B cell (primary cell): ENCODE measurements at regions of chrX and their contacts with region 1.

Region 1: GRCh38 chrX:75156021-75156945 is at the start of gene ABCB7:
- DNase-seq: peak; percentile 81
- ATAC-seq: peak; percentile 89
- H3K4me3 ChIP-seq: peak within 1 kb of the TSS; percentile 45 to 75 (median 70)
- H3K4me3 Mint-ChIP-seq: peak within 1 kb of the TSS; percentile 86
- H3K27ac ChIP-seq: peak within 1 kb of the TSS; percentile 78 to 82
- H3K27ac Mint-ChIP-seq: peak within 1 kb of the TSS; percentile 94
- H3K4me1 ChIP-seq: peaks cover 6 to 9% of the 10 kb centered on the region in 2 donors
- H3K4me1 Mint-ChIP-seq: peaks cover 37% of the 10 kb centered on the region
- H3K27me3 ChIP-seq: no peaks in the 10 kb centered on the region
- H3K27me3 Mint-ChIP-seq: no peaks in the 10 kb centered on the region
- CTCF ChIP-seq: no peak
- total RNA-seq, gene ABCB7: 34.7 and 39.1 TPM in 2 replicates

Region 2: GRCh38 chrX:74924449-74925225 is 231.6 kb before region 1 on chrX:
- CTCF ChIA-PET with region 1: no interaction called
- POLR2A ChIA-PET with region 1: no interaction called
- intact Hi-C with region 1: loop called (anchors 5 kb)
- DNase-seq: peak; percentile 53
- ATAC-seq: peak; percentile 52
- H3K4me3 ChIP-seq: peak overlapping the region in 4 of 5 experiments; percentile 24 to 56 (median 43)
- H3K4me3 Mint-ChIP-seq: peak overlapping the region; percentile 95
- H3K27ac ChIP-seq: no peak overlapping the region
- H3K27ac Mint-ChIP-seq: peak overlapping the region; percentile 91
- H3K4me1 ChIP-seq: peaks cover 11% of the 10 kb centered on the region in 2 donors
- H3K4me1 Mint-ChIP-seq: peaks cover 18% of the 10 kb centered on the region
- H3K27me3 ChIP-seq: peaks cover 0 to 4% (median 1%) of the 10 kb centered on the region in 4 experiments
- H3K27me3 Mint-ChIP-seq: peaks cover 7% of the 10 kb centered on the region
- CTCF ChIP-seq: no peak

Region 3: DNA sequence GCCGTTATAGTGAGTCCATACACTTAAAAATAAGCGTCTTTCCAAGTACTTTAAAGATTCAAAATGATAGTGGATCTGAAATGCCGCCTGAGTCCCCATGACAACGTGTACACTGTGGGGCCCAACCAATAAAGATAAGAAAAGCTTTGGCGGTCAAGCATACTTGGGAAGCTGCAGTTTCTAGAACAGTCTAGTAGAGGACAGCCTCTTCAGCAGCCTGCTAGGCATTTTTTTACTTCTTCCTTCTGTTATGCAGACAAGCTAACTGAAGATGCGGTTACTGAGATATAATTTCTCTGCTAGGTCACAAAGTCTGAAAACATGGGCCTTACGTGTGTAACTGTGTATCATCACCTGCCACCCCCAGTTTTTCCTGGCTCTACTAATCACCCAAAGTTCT is 117.2 kb after region 1 on chrX:
- CTCF ChIA-PET with region 1: no interaction called
- POLR2A ChIA-PET with region 1: no interaction called
- intact Hi-C with region 1: loop called (anchors 2 kb)
- DNase-seq: no peak
- ATAC-seq: peak; percentile 7
- H3K4me3 ChIP-seq: peak overlapping the region in 4 of 5 experiments; percentile 68 to 96 (median 90)
- H3K4me3 Mint-ChIP-seq: peak overlapping the region; percentile 93
- H3K27ac ChIP-seq: peak overlapping the region; percentile 89 to 90
- H3K27ac Mint-ChIP-seq: peak overlapping the region; percentile 94
- H3K4me1 ChIP-seq: peaks cover 14 to 15% of the 10 kb centered on the region in 2 donors
- H3K4me1 Mint-ChIP-seq: peaks cover 46% of the 10 kb centered on the region
- H3K27me3 ChIP-seq: no peaks in the 10 kb centered on the region
- H3K27me3 Mint-ChIP-seq: no peaks in the 10 kb centered on the region
- CTCF ChIP-seq: no peak